Gastrocnemius medialis (tissue), 4 donors: ENCODE measurements at regions of chr21 and their contacts with region 1.

Region 1: GRCh38 chr21:35697321-35697808 is 363.0 kb downstream of the SETD4 start:
- DNase-seq: peak; percentile 30 to 42
- ATAC-seq: no peak
- H3K4me3 ChIP-seq: no peak overlapping the region
- H3K27ac ChIP-seq: no peak overlapping the region
- H3K4me1 ChIP-seq: peaks cover 0 to 6% of the 10 kb centered on the region in 2 donors
- H3K27me3 ChIP-seq: no peaks in the 10 kb centered on the region
- CTCF ChIP-seq: no peak
- POLR2A ChIP-seq: no peak

Region 2: GRCh38 chr21:35528116-35529042 is 169.0 kb before region 1 on chr21:
- in situ Hi-C with region 1: no loop called
- intact Hi-C with region 1: no loop called
- DNase-seq: no peak
- ATAC-seq: no peak
- H3K4me3 ChIP-seq: peak overlapping the region; percentile 9 to 39 (median 34)
- H3K27ac ChIP-seq: no peak overlapping the region
- H3K4me1 ChIP-seq: no peaks in the 10 kb centered on the region
- H3K27me3 ChIP-seq: no peaks in the 10 kb centered on the region
- CTCF ChIP-seq: no peak
- POLR2A ChIP-seq: no peak

Region 3: GRCh38 chr21:35674895-35675470 is 22.4 kb before region 1 on chr21:
- in situ Hi-C with region 1: no loop called
- intact Hi-C with region 1: no loop called
- DNase-seq: no peak
- ATAC-seq: no peak
- H3K4me3 ChIP-seq: no peak overlapping the region
- H3K27ac ChIP-seq: no peak overlapping the region
- H3K4me1 ChIP-seq: no peaks in the 10 kb centered on the region
- H3K27me3 ChIP-seq: no peaks in the 10 kb centered on the region
- CTCF ChIP-seq: no peak
- POLR2A ChIP-seq: no peak

Region 4: GRCh38 chr21:35779690-35780570 is 82.6 kb after region 1 on chr21:
- in situ Hi-C with region 1: loop called in 1 of 4 experiments (anchors 25 kb)
- intact Hi-C with region 1: no loop called
- DNase-seq: no peak
- ATAC-seq: no peak
- H3K4me3 ChIP-seq: no peak overlapping the region
- H3K27ac ChIP-seq: no peak overlapping the region
- H3K4me1 ChIP-seq: no peaks in the 10 kb centered on the region
- H3K27me3 ChIP-seq: no peaks in the 10 kb centered on the region
- CTCF ChIP-seq: no peak
- POLR2A ChIP-seq: no peak